ENCODE measurements at regions of chr20 and their contacts with region 1.

Region 1: DNA sequence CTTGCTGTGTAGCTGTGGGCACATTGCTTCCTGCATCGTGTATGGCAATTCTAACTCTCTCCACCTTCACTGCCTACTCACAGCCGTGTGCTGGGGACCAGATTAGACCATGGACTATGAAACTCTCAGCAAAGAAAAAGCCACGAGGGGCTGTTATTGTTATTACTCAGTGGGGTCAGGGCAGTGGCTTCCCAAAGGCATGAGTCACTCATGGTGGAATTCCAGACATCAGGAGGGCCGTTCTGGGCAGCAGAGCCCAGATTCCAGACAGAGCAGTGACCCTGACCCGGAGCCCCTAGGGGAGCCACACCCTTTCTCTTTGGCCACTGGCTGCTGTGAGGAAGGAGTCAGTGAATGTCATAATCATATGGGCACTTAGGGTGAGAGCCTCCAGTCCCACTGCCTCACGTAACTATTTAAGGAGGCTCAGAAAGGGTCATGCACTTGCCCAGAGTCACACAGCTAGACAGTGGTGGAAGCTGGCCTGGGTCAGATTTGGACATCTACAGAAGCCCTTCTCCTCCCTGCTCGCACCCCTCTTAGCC is 22.2 kb upstream of the CCN5 start:
- DNase-seq: peak; percentile 97
- ATAC-seq: peak; percentile 98
- H3K4me3 ChIP-seq: no peak overlapping the region
- H3K27ac ChIP-seq: peak overlapping the region; percentile 99
- H3K4me1 ChIP-seq: peaks cover 42% of the 10 kb centered on the region
- H3K27me3 ChIP-seq: no peaks in the 10 kb centered on the region
- CTCF ChIP-seq: no peak

Region 2: GRCh38 chr20:44733341-44734069 is 40.5 kb after region 1 on chr20:
- CTCF ChIA-PET with region 1: interaction called, 6 read pairs
- POLR2A ChIA-PET with region 1: interaction called, 5 read pairs
- in situ Hi-C with region 1: no loop called
- intact Hi-C with region 1: loop called (anchors 1 kb)
- DNase-seq: peak; percentile 83
- ATAC-seq: peak; percentile 41
- H3K4me3 ChIP-seq: no peak overlapping the region
- H3K27ac ChIP-seq: peak overlapping the region; percentile 99
- H3K4me1 ChIP-seq: peaks cover 53% of the 10 kb centered on the region
- H3K27me3 ChIP-seq: no peaks in the 10 kb centered on the region
- CTCF ChIP-seq: peak; percentile 98

Region 3: DNA sequence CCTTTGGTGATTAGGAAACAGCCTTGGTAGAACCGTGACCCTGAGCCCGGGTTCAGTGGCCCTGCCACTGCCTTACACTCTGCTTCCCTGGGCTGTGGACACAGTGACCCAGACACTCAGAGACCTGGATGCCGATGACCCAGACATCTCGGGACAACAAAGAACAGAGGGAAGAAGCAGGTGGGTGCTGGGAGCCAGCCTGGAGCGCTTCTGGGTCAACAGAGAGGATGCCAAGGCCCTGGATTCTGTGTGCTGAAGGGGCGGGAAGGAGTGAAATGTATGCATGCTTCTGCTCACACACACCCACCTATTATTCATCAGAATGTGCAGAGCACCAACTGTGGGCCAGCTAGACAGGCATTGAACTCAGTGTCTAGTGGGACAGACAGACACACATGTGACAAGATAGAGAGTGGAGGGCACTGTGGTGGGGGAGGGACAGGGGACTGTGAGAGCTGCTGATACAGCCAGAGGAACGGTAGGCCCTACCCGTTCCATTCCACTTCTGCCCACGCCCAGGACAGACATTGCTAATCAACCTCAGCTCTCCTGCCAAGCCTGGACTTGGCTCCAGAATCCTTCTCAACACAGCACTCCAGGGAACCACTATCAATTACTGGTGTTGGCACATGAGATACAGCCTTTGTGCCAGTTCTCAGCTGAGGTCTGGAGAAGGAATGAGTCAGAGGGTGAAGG is 72.8 kb after region 1 on chr20:
- CTCF ChIA-PET with region 1: no interaction called
- POLR2A ChIA-PET with region 1: interaction called, 10 read pairs
- in situ Hi-C with region 1: no loop called
- intact Hi-C with region 1: no loop called
- DNase-seq: no peak
- ATAC-seq: 0 out of 2 replicates have a peak, but pooled peaks have one; percentile 28
- H3K4me3 ChIP-seq: no peak overlapping the region
- H3K27ac ChIP-seq: no peak overlapping the region
- H3K4me1 ChIP-seq: no peaks in the 10 kb centered on the region
- H3K27me3 ChIP-seq: no peaks in the 10 kb centered on the region
- CTCF ChIP-seq: no peak